GM12878 (cell line): ENCODE measurements at regions of chr3 and their contacts with region 1.

Region 1: DNA sequence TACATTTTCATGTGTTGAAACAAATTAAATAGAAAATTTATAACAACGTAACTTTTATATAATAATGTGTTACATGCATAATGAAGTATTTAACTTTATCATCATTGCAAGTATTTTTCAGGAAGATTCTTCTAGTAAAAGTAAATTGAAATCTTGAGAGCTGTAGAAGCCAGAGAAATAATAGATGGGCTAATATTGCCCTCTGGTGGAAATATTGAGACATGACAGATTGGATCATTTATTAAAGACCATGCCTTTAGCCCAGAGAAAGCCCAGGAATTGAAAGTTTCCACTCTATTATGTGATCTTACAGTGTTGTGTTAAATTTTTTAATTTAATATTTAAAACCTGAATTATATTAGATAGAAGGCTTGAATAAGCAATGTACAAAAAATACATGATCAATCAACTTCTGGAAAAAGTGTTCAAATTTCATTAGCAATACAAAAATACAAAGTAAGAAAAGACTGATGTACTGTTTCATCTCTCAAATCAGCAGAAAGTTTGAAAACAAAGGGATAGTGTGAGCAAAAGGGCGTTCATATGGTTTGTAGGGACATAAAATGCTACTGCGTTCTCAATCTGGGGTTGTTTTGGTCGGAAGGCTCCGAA is 52.7 kb upstream of the SPTSSB start:
- DNase-seq: no peak
- ATAC-seq: peak; percentile 76
- H3K4me3 ChIP-seq: no peak overlapping the region
- H3K27ac ChIP-seq: no peak overlapping the region
- H3K4me1 ChIP-seq: no peaks in the 10 kb centered on the region
- H3K27me3 ChIP-seq: no peaks in the 10 kb centered on the region
- CTCF ChIP-seq: peak; percentile 44 to 68 (median 47); a peak in 5 of 6 replicates
- EP300 ChIP-seq: no peak
- POLR2A ChIP-seq: no peak
- RAD21 ChIP-seq: peak; percentile 83

Region 2: DNA sequence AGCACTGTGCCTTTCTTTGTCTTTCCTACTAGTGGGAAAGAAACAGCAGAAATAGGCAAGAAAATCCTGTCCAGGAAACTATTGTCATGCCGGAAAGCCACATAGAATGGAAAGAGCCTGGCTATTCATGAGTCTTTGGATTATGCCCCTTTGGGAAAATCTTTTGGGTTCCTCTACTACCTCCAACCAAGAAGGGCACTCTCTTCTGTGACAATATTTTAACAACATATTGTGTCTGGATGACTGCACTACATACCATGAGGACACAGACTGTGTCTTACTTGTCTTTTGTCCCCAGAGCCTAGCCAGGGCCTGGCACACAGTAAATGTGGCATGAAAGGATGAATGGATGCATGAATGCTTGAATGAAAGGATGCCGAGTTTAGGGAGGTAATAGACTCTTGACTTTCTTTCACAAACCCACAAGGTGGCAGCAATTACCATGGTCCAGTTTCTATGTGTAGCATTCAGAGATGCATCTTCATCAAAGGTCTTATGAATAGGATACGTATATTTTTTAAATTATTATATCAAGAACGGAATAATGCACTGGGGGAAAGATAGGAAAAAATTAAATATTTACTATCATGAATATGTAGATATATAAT is 716.7 kb before region 1 on chr3:
- CTCF ChIA-PET with region 1: interaction called, 6 read pairs
- POLR2A ChIA-PET with region 1: no interaction called
- RAD21 ChIA-PET with region 1: no interaction called
- SMC1A ChIA-PET with region 1: interaction called, 3 read pairs
- in situ Hi-C with region 1: no loop called
- intact Hi-C with region 1: loop called (anchors 5 kb)
- DNase-seq: peak; percentile 11
- ATAC-seq: peak; percentile 83
- H3K4me3 ChIP-seq: no peak overlapping the region
- H3K27ac ChIP-seq: no peak overlapping the region
- H3K4me1 ChIP-seq: no peaks in the 10 kb centered on the region
- H3K27me3 ChIP-seq: peaks cover 3 to 5% of the 10 kb centered on the region in 2 experiments; a peak in 2 of 4 replicates
- CTCF ChIP-seq: peak; percentile 42 to 68 (median 46); a peak in 5 of 6 replicates
- EP300 ChIP-seq: no peak
- POLR2A ChIP-seq: no peak
- RAD21 ChIP-seq: peak; percentile 78

Region 3: DNA sequence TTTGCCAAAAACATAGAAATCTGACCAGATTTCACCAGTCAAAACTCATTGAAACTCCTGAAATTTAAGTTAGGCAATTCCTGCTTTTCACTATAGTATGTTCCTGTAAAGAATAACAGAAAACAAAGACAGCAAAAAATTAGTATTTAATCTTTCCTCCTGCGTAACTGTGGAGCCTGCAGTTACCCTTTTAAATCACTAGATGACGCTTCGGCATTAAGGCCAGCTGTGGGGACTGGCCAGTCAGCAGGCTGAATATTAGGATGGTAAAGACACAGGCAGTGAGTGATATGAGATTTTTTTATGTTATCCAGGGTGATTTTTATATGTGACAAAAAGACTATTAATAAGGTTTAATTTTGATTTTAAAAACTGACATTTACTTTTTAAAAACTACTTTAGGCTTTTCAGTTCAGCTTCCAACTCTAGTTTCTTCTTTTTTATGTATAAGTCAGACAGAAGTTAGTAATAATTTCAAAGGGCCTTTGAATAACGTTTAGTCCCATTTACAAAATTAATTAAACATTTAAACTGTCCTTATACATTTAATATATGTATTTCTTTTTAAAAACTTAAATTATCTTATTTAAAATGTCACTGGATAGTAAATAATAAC is 502.9 kb before region 1 on chr3:
- CTCF ChIA-PET with region 1: interaction called, 5 read pairs
- POLR2A ChIA-PET with region 1: no interaction called
- RAD21 ChIA-PET with region 1: no interaction called
- SMC1A ChIA-PET with region 1: interaction called, 3 read pairs
- in situ Hi-C with region 1: no loop called
- intact Hi-C with region 1: loop called (anchors 1 kb)
- DNase-seq: no peak
- ATAC-seq: peak; percentile 77
- H3K4me3 ChIP-seq: no peak overlapping the region
- H3K27ac ChIP-seq: no peak overlapping the region
- H3K4me1 ChIP-seq: no peaks in the 10 kb centered on the region
- H3K27me3 ChIP-seq: no peaks in the 10 kb centered on the region; a peak in 2 of 4 replicates
- CTCF ChIP-seq: peak; percentile 63 to 77 (median 70)
- EP300 ChIP-seq: no peak
- POLR2A ChIP-seq: no peak
- RAD21 ChIP-seq: peak; percentile 72

Region 4: GRCh38 chr3:160956806-160957205 is 467.2 kb before region 1 on chr3:
- CTCF ChIA-PET with region 1: interaction called, 13 read pairs
- POLR2A ChIA-PET with region 1: no interaction called
- RAD21 ChIA-PET with region 1: interaction called, 6 read pairs
- SMC1A ChIA-PET with region 1: interaction called, 7 read pairs
- in situ Hi-C with region 1: loop called (anchors 10 kb)
- intact Hi-C with region 1: loop called (anchors 5 kb)
- DNase-seq: no peak
- ATAC-seq: peak; percentile 79
- H3K4me3 ChIP-seq: no peak overlapping the region
- H3K27ac ChIP-seq: no peak overlapping the region
- H3K4me1 ChIP-seq: no peaks in the 10 kb centered on the region
- H3K27me3 ChIP-seq: no peaks in the 10 kb centered on the region
- CTCF ChIP-seq: peak; percentile 44 to 55 (median 47); a peak in 5 of 6 replicates
- EP300 ChIP-seq: no peak
- POLR2A ChIP-seq: no peak
- RAD21 ChIP-seq: peak; percentile 62

Region 5: DNA sequence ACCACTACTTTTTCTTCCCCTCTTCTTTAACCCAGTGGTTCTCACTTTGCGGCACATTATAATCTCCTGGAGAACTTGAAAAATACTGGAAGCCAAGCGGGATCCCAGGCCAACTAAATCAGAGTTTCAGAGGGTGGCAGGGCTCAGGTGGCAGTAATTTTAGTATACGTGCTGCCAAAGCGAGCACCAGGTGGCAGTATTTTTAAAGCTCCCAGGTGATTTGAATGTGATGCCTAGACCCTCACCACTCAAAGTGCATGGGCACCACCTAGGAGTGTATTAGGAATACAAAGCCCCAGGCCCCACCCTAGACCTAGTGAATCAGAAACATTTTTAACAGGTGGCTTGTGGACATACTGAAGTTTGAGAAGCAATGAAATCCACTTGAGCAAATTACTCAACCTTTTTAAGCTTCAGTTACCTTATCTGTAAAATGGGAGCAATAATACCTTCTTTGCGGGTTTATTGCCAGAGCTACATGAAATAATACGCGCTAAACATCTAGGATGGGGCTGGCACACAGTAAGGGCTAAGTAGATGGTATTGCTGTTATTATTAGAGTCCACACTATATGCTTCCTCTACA is 327.2 kb before region 1 on chr3:
- CTCF ChIA-PET with region 1: interaction called, 6 read pairs
- POLR2A ChIA-PET with region 1: no interaction called
- RAD21 ChIA-PET with region 1: interaction called, 3 read pairs
- SMC1A ChIA-PET with region 1: interaction called, 6 read pairs
- in situ Hi-C with region 1: loop called (anchors 10 kb)
- intact Hi-C with region 1: loop called (anchors 5 kb)
- DNase-seq: no peak
- ATAC-seq: peak; percentile 69
- H3K4me3 ChIP-seq: no peak overlapping the region
- H3K27ac ChIP-seq: no peak overlapping the region
- H3K4me1 ChIP-seq: no peaks in the 10 kb centered on the region
- H3K27me3 ChIP-seq: no peaks in the 10 kb centered on the region; a peak in 1 of 4 replicates
- CTCF ChIP-seq: peak; percentile 41 to 43 (median 42); a peak in 5 of 6 replicates
- EP300 ChIP-seq: no peak
- POLR2A ChIP-seq: no peak
- RAD21 ChIP-seq: no peak

Region 6: GRCh38 chr3:161409069-161409468 is 14.9 kb before region 1 on chr3:
- CTCF ChIA-PET with region 1: interaction called, 12 read pairs
- POLR2A ChIA-PET with region 1: no interaction called
- RAD21 ChIA-PET with region 1: no interaction called
- SMC1A ChIA-PET with region 1: interaction called, 13 read pairs
- in situ Hi-C with region 1: no loop called
- intact Hi-C with region 1: no loop called
- DNase-seq: no peak
- ATAC-seq: peak; percentile 70
- H3K4me3 ChIP-seq: no peak overlapping the region
- H3K27ac ChIP-seq: no peak overlapping the region
- H3K4me1 ChIP-seq: peaks cover 4% of the 10 kb centered on the region; the same call in 1 of the 2 replicates
- H3K27me3 ChIP-seq: no peaks in the 10 kb centered on the region
- CTCF ChIP-seq: peak; percentile 41 to 59 (median 51); a peak in 5 of 6 replicates
- EP300 ChIP-seq: no peak
- POLR2A ChIP-seq: no peak
- RAD21 ChIP-seq: peak; percentile 60